Mammary epithelial cell (primary cell): ENCODE measurements at regions of chr2 and their contacts with region 1.

Region 1: DNA sequence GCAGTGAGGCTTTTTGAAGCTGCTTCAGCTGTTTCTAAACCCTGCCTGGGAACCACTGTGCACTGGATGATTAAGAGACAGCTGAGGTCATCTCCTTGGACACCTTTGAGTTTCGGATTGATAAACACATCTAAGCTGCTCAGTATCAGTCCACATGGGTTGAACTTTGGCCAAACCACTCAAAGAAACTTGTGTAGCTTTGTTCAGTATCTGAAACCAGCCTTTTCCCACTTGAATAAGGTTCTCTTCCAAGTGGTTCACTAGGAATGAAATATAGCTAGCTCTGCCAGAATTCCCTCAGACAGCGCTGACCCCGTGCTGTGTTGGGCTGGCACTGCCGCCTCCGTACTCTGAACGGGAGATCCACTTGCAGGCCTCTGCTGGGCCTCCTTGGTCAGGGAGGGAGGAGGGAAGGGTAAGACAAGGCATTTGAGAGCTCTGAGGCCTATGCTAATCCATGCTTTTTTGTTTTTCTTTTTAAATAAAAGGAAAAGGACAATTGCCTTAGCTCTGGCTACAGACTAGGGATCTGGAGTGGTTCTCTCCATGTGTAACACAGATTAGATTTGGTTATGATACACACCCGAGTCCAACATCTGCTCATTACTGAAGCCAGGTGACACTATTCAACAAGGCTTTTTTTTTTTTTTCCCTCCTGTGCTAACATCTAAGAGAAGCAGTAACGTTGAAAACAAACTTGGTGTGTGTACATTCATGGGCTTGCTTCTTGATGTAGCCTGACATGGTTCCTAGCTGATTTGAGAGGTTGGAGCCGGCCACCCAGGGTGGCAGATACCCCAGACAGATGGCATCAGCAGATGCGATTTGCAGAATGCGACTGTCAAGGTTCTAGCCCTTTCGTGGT is 67.7 kb downstream of the NCK2 start:
- DNase-seq: peak; percentile 96
- H3K4me3 ChIP-seq: no peak overlapping the region
- H3K27ac ChIP-seq: peak overlapping the region; percentile 89
- H3K4me1 ChIP-seq: peaks cover 38% of the 10 kb centered on the region
- H3K27me3 ChIP-seq: no peaks in the 10 kb centered on the region
- CTCF ChIP-seq: no peak

Region 2: GRCh38 chr2:105761931-105762515 is 50.4 kb before region 1 on chr2:
- CTCF ChIA-PET with region 1: no interaction called
- dilution Hi-C with region 1: no loop called
- in situ Hi-C with region 1: no loop called
- intact Hi-C with region 1: loop called (anchors 5 kb)
- DNase-seq: no peak
- H3K4me3 ChIP-seq: no peak overlapping the region
- H3K27ac ChIP-seq: no peak overlapping the region
- H3K4me1 ChIP-seq: peaks cover 12% of the 10 kb centered on the region
- H3K27me3 ChIP-seq: no peaks in the 10 kb centered on the region
- CTCF ChIP-seq: no peak

Region 3: DNA sequence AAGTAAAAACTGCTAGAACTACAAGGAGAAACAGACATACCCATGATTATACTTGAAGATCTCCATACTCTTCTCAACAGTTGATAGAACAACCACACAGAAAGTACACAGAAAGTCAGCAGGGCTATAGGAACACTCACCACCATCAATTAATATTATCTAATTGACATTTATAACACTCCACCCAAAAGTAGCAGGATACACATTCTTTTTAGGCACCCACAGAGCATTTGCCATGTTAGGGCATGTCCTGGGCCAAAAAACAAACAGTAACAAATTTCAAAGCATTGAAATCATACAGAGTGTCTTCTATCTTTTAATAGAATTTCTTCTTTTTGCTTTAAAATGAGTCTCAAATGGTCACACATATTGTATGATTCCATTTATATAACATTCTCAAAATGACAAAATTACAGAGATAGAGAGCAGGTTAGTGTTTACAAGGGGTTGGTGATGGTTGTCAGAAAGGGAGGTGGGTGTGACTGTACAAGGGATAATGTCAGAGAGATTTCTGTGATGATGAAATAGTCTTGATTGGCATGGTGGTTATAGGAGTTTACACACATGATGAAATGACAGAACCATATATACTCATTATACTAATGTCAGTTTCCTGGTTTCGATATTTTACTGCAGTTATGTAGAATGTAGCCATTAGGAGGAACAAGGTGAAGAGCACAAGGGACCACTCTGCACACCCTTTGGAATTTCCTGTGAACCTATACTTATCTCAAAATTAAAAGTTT is 15.1 kb after region 1 on chr2:
- CTCF ChIA-PET with region 1: no interaction called
- dilution Hi-C with region 1: no loop called
- in situ Hi-C with region 1: no loop called
- intact Hi-C with region 1: no loop called
- DNase-seq: peak; percentile 78
- H3K4me3 ChIP-seq: no peak overlapping the region
- H3K27ac ChIP-seq: peak overlapping the region; percentile 78
- H3K4me1 ChIP-seq: peaks cover 17% of the 10 kb centered on the region
- H3K27me3 ChIP-seq: no peaks in the 10 kb centered on the region
- CTCF ChIP-seq: no peak

Region 4: DNA sequence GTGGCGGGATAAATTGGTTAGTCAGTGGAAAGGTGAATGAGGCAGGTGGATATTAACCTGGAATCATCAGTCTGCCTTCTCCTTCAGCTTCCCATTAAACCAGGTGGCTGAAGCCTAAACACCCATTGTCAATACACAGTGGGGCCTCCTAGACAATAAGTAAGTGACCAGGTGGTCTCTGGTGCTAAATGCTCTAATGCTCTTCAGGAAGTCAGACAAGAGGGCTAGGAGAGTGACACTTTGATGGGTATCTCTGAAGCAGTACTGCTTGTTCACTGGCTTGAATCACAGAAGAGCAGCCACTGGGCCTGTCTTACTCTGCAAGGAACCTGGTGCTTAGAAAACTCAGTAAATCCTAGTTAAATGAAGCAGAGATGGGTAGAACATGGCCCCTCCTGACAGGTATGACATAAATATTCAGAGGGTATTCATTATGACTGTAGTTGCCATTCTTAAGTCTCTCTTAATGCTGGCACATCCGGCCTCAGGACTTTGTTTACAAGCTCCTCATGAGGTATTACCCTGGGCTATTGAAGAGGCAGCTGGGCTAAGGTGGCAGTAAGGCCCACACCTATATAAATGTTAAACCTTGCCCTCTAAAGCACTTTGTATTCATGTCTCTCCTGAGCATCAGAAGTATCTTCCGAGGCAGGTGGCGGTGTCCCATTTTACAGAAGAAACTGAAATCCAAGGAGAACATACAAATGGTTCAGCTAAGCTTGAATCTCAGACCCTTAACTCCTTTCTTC is 37.2 kb after region 1 on chr2:
- CTCF ChIA-PET with region 1: no interaction called
- dilution Hi-C with region 1: loop called (anchors 5 kb)
- in situ Hi-C with region 1: no loop called
- intact Hi-C with region 1: no loop called
- DNase-seq: no peak
- H3K4me3 ChIP-seq: no peak overlapping the region
- H3K27ac ChIP-seq: no peak overlapping the region
- H3K4me1 ChIP-seq: peaks cover 13% of the 10 kb centered on the region
- H3K27me3 ChIP-seq: no peaks in the 10 kb centered on the region
- CTCF ChIP-seq: no peak

Region 5: DNA sequence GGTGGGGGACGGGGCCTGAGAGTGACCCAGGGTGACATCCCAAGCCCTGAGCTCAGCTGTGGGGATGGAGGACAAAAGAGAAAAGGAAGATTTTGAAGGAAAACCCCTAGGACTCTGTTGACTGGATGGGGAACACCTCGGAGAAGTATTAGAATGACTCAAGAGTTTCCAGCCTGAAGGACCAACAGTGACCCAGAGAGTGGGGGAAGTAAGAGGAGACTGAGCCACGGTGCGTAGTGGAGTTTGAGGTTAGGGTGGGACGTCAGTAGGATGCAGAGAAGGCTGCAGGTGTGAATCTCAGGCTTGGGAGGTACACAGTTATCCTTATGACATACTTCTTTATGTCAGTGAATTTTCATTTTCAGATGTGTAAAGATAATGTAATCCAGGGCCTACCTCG is 51.9 kb after region 1 on chr2:
- CTCF ChIA-PET with region 1: no interaction called
- dilution Hi-C with region 1: no loop called
- in situ Hi-C with region 1: no loop called
- intact Hi-C with region 1: no loop called
- DNase-seq: no peak
- H3K4me3 ChIP-seq: no peak overlapping the region
- H3K27ac ChIP-seq: no peak overlapping the region
- H3K4me1 ChIP-seq: peaks cover 14% of the 10 kb centered on the region
- H3K27me3 ChIP-seq: no peaks in the 10 kb centered on the region
- CTCF ChIP-seq: no peak